ENCODE measurements at regions of chr10 and their contacts with region 1.

Region 1: GRCh38 chr10:46239247-46239646 is 47.5 kb upstream of the ANTXRL start:
- DNase-seq: no peak
- ATAC-seq: no peak
- H3K4me3 ChIP-seq: no peak overlapping the region
- H3K27ac ChIP-seq: no peak overlapping the region
- H3K4me1 ChIP-seq: no peaks in the 10 kb centered on the region
- H3K27me3 ChIP-seq: peaks cover 0 to 4% (median 0%) of the 10 kb centered on the region in 4 donors
- CTCF ChIP-seq: no peak

Region 2: DNA sequence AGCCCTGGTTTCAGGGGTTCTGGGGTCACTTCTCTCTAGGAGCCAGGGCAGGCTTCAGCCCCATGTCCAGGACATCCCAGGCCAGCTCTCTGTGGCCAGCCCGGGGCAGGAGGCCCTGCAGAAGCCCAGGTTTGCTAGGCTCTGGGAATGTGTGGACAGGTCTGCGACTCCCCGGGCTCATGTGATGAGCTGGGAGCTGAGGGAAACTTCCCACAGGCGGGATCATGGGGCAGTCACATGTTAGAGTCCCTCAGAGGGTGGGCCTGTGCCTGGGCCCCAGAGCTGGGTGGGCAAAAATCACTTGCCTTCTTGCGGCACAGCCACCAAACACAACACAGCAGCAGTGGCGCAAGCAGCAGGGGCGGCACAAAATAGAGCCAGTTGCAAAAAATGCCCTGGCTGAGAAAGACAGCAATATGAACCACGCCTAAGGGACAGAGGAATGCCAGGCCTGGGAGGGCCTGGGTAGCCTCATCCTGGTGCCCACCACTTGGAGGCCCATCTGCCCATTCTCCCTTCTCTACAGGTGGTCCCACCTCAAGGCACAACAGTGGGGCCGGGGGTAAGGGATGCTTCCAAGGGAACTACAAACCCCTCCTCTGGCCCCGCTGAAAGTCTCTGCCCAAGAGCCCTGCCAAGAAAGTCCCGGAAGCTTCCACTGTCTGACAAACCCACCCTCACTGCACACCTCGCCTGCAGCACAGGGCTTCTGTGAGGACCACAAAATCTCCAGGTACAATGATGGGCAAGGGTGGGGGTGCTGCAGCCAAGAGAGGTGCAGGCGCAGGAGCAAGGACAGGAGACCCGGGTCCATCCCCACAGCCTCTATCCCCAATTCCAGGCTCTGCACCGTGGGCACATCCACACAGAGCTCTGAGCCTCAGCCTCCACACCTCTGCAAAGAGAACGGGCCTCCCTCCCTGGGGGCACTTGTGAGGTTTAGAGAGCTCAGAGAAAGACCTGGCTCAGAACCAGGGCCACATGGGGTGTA is 12.9 kb after region 1 on chr10:
- intact Hi-C with region 1: loop called in 1 of 3 experiments (anchors 2 kb)
- DNase-seq: no peak
- ATAC-seq: no peak
- H3K4me3 ChIP-seq: no peak overlapping the region
- H3K27ac ChIP-seq: no peak overlapping the region
- H3K4me1 ChIP-seq: peaks cover 0 to 5% (median 0%) of the 10 kb centered on the region in 3 donors
- H3K27me3 ChIP-seq: no peaks in the 10 kb centered on the region
- CTCF ChIP-seq: no peak